ENCODE measurements at regions of chr6 and their contacts with region 1.

Region 1: DNA sequence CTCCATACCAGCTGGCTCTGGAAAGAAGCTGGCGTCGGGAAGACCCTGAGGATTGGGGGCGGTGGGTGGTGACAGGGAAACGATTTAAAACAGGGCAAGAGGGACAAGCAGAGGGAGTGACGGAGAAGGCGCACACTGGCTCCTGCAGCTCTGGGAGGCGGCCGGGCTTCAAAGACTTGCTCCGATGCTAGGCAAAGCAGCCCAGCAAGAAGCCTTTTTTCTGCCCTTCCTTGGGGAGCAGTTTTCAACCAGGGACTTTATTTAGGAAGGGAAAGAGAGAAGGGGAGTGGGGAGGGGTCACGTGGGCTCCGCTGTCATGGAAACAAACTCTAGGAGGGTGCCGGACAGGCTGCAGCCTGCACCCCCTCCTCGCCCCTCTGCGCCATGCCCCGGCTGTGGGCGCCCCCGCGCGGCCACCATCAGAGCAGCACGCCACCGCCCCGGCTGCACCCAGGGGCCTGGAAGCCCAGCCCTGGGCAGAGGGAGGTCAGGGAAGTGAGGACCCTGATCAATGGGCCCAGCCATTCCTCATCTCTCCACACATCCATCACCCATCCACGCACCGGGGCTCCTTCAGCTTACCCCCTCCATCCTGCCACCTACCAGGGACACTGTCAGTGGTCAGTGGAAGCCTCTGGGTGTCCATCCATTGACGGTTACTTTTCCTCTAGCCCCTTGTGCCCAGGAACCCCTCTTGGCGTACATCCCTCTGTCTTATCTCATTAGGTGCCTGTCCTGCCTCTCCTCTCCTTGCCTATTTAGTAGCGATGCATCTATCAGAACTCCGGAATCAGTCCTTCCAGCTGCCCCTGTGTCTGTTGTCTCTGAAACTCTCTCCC is 66.6 kb upstream of the CCDC167 start:
- DNase-seq: no peak
- ATAC-seq: peak; percentile 97
- H3K4me3 ChIP-seq: peak overlapping the region; percentile 40
- H3K27ac ChIP-seq: no peak overlapping the region
- H3K4me1 ChIP-seq: no peaks in the 10 kb centered on the region
- H3K27me3 ChIP-seq: peaks cover 40% of the 10 kb centered on the region
- CTCF ChIP-seq: peak; percentile 86
- POLR2A ChIP-seq: no peak
- RAD21 ChIP-seq: peak; percentile 84

Region 2: GRCh38 chr6:37324131-37325033 is 241.9 kb before region 1 on chr6:
- CTCF ChIA-PET with region 1: interaction called, 6 read pairs
- POLR2A ChIA-PET with region 1: no interaction called
- dilution Hi-C with region 1: no loop called
- in situ Hi-C with region 1: no loop called
- intact Hi-C with region 1: loop called (anchors 5 kb)
- DNase-seq: peak; percentile 70
- ATAC-seq: peak; percentile 40
- H3K4me3 ChIP-seq: no peak overlapping the region
- H3K27ac ChIP-seq: no peak overlapping the region
- H3K4me1 ChIP-seq: peaks cover 3% of the 10 kb centered on the region
- H3K27me3 ChIP-seq: no peaks in the 10 kb centered on the region
- CTCF ChIP-seq: no peak
- POLR2A ChIP-seq: no peak
- RAD21 ChIP-seq: no peak

Region 3: DNA sequence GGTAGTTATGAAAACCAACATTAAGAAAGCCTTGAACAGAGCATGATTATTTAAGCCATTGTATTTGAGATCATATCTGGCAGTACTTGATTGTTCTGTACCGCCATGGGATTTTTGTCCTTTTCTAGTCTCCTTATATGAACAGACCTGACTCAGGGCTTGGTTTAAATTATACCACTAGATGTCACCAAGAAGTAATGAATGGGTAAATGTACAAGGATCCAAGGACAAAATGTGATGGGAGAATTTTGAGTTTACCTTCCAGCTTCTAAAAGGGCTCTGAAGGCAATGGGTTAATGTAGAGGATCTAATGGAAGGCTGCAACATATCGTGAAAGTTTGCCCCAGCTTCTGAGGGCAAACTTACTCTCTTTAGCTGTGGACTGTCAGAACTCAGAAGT is 200.6 kb before region 1 on chr6:
- CTCF ChIA-PET with region 1: no interaction called
- POLR2A ChIA-PET with region 1: no interaction called
- dilution Hi-C with region 1: no loop called
- in situ Hi-C with region 1: no loop called
- intact Hi-C with region 1: loop called (anchors 5 kb)
- DNase-seq: peak; percentile 35
- ATAC-seq: peak; percentile 55
- H3K4me3 ChIP-seq: no peak overlapping the region
- H3K27ac ChIP-seq: no peak overlapping the region
- H3K4me1 ChIP-seq: peaks cover 10% of the 10 kb centered on the region
- H3K27me3 ChIP-seq: no peaks in the 10 kb centered on the region
- CTCF ChIP-seq: peak; percentile 46
- POLR2A ChIP-seq: no peak
- RAD21 ChIP-seq: peak; percentile 47

Region 4: GRCh38 chr6:37483917-37484785 is 82.2 kb before region 1 on chr6:
- CTCF ChIA-PET with region 1: no interaction called
- POLR2A ChIA-PET with region 1: no interaction called
- dilution Hi-C with region 1: no loop called
- in situ Hi-C with region 1: no loop called
- intact Hi-C with region 1: loop called (anchors 1 kb)
- DNase-seq: peak; percentile 29
- ATAC-seq: peak; percentile 94
- H3K4me3 ChIP-seq: no peak overlapping the region
- H3K27ac ChIP-seq: no peak overlapping the region
- H3K4me1 ChIP-seq: no peaks in the 10 kb centered on the region
- H3K27me3 ChIP-seq: no peaks in the 10 kb centered on the region
- CTCF ChIP-seq: peak; percentile 84
- POLR2A ChIP-seq: no peak
- RAD21 ChIP-seq: peak; percentile 89